BJ (cell line): ENCODE measurements at regions of chr2 and their contacts with region 1.

Region 1: DNA sequence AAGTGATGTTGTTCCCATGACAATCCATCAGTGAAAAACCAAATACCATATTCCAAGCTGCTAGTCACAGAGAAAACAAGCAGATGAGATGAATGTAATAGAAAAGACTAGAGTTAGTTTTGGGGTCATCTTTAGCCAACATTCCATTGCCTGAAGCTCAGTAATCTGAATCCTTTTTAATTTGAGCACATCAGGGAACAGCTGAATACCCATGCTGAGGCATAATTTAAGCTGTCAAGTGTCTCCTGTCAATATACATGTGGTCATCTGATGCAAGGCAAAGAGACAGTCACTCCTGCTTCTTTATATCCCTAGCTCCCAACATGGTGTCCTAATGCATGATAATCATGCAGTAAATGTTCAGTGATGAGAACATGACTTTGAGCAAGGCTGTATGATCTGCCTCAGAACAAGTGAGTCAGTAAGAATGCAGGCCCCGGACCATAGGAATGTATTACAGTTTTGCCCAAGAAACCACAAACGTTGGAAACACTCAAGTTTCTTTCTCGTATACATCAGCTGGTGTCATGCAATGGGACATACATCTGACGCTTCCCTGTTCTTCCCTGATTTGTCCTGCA is 48.0 kb downstream of the CDK15 start:
- DNase-seq: peak; percentile 88
- H3K4me3 ChIP-seq: no peak overlapping the region
- H3K27me3 ChIP-seq: no peaks in the 10 kb centered on the region
- CTCF ChIP-seq: no peak

Region 2: DNA sequence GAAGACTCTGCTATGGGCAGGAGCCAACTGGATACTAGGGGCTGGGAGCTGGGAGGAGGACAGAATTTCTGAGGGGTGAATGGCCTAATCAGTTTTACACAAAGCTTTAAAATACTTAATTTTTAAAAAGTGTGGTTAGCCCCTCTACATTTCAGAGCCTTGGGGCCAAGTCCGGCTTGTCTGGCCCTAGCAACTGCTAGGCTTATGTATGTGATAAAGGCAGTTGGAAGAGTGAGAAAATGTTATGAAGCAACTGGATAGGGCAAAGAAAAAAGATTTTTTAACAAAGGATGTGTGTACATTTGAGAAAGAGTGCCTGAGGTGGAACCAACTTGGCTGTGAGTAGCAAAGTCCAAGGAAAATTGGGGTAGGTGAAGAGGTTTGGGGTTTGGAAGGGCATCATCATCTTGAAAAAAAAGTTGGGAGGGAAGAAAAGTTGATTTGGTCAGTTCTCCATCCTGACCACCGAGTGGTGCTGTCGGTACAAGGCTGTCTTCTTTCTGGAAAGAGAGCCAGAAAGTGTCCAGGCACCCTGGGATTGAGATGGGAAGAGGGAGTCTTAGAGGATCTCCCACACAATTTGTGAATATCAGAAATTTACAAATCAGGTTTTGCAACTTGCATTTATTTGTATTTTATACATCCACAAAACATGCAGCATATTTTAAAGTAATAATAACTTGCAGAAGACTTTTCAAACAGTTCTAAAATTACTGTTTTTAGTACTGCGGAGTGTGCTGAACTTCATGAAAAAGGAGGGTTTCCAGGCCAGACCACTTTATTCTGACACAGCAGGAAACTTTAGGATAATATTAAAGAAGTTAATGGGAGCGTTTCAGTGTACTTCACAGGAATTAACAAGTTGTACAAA is 58.5 kb before region 1 on chr2:
- CTCF ChIA-PET with region 1: interaction called, 18 read pairs
- POLR2A ChIA-PET with region 1: no interaction called
- DNase-seq: no peak
- H3K4me3 ChIP-seq: no peak overlapping the region
- H3K27me3 ChIP-seq: no peaks in the 10 kb centered on the region
- CTCF ChIP-seq: peak; percentile 86

Region 3: GRCh38 chr2:201807452-201807999 is 46.8 kb before region 1 on chr2:
- CTCF ChIA-PET with region 1: interaction called, 10 read pairs
- POLR2A ChIA-PET with region 1: no interaction called
- DNase-seq: no peak
- H3K4me3 ChIP-seq: no peak overlapping the region
- H3K27me3 ChIP-seq: no peaks in the 10 kb centered on the region
- CTCF ChIP-seq: no peak

Region 4: DNA sequence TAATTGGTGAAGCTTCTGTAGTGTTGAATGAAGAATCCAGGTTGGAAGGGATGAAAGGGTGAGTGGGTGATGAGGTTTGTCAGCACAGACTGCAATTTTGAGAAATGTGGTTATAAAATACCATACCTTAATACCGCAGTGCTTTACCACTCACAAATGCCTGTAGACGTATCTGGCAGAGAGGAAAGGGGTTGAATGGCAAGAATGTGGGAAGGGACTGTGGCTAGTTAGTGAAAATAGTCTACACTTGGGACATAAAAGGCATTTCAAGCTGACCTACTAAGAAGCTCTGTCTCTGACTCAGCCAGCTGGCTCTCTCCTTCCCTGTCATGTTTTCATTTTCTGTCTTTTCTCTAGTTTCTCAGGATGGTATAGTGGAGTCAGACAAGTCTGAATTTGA is 22.8 kb before region 1 on chr2:
- CTCF ChIA-PET with region 1: no interaction called
- POLR2A ChIA-PET with region 1: no interaction called
- DNase-seq: peak; percentile 37
- H3K4me3 ChIP-seq: no peak overlapping the region
- H3K27me3 ChIP-seq: no peaks in the 10 kb centered on the region
- CTCF ChIP-seq: no peak

Region 5: GRCh38 chr2:201882353-201883090 is 28.2 kb after region 1 on chr2:
- CTCF ChIA-PET with region 1: interaction called, 3 read pairs
- POLR2A ChIA-PET with region 1: interaction called, 11 read pairs
- DNase-seq: no peak
- H3K4me3 ChIP-seq: no peak overlapping the region
- H3K27me3 ChIP-seq: no peaks in the 10 kb centered on the region
- CTCF ChIP-seq: no peak

Region 6: DNA sequence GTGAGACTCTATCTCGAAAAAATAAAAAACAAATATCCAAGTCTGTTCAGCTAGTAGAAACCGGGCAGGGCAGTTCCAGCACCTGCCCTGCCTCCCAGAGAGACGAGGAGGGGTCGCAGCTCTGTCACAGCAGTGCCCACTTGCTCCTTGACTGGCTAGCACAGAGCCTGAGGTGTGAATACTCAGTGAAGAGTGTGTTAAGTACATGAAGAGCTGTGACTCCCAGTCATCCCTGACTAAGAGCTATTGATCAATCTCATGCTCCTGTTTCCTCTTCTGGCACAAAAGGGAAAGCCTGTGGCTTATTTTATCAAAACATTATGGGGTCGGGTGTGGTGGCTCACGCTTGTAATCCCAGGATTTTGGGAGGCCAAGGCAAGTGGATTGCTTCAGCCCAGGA is 96.3 kb after region 1 on chr2:
- CTCF ChIA-PET with region 1: no interaction called
- POLR2A ChIA-PET with region 1: no interaction called
- DNase-seq: no peak
- H3K4me3 ChIP-seq: no peak overlapping the region
- H3K27me3 ChIP-seq: no peaks in the 10 kb centered on the region; the same call in 1 of the 2 replicates
- CTCF ChIP-seq: no peak